K562 (cell line): ENCODE measurements at regions of chr2 and their contacts with region 1.

Region 1: GRCh38 chr2:73156539-73157124 is 43.9 kb upstream of the RAB11FIP5 start:
- DNase-seq: peak; percentile 27 to 67 (median 47)
- ATAC-seq: peak; percentile 96
- H3K4me3 ChIP-seq: no peak overlapping the region
- H3K27ac ChIP-seq: no peak overlapping the region
- H3K4me1 ChIP-seq: peaks cover 2 to 8% of the 10 kb centered on the region in 2 experiments; a peak in 3 of 5 replicates
- H3K27me3 ChIP-seq: peaks cover 3 to 29% of the 10 kb centered on the region in 2 experiments; a peak in 4 of 5 replicates
- CTCF ChIP-seq: peak; percentile 70 to 95 (median 85); a peak in 5 of 6 replicates
- EP300 ChIP-seq: no peak
- POLR2A ChIP-seq: no peak
- RAD21 ChIP-seq: peak; percentile 88 to 94

Region 2: GRCh38 chr2:72859831-72860262 is 296.8 kb before region 1 on chr2:
- CTCF ChIA-PET with region 1: no interaction called
- POLR2A ChIA-PET with region 1: no interaction called
- in situ Hi-C with region 1: no loop called
- intact Hi-C with region 1: no loop called
- DNase-seq: peak; percentile 45 to 74 (median 51)
- ATAC-seq: peak; percentile 84
- H3K4me3 ChIP-seq: no peak overlapping the region
- H3K27ac ChIP-seq: no peak overlapping the region
- H3K4me1 ChIP-seq: peaks cover 3 to 8% of the 10 kb centered on the region in 2 experiments; a peak in 3 of 5 replicates
- H3K27me3 ChIP-seq: peaks cover 0 to 5% of the 10 kb centered on the region in 2 experiments; a peak in 1 of 5 replicates
- CTCF ChIP-seq: peak; percentile 70 to 79 (median 71)
- EP300 ChIP-seq: no peak
- POLR2A ChIP-seq: no peak
- RAD21 ChIP-seq: peak; percentile 78 to 82

Region 3: GRCh38 chr2:72943540-72944395 is 212.9 kb before region 1 on chr2:
- CTCF ChIA-PET with region 1: no interaction called
- POLR2A ChIA-PET with region 1: no interaction called
- in situ Hi-C with region 1: no loop called
- intact Hi-C with region 1: no loop called
- DNase-seq: no peak
- ATAC-seq: no peak
- H3K4me3 ChIP-seq: no peak overlapping the region
- H3K27ac ChIP-seq: no peak overlapping the region
- H3K4me1 ChIP-seq: no peaks in the 10 kb centered on the region; a peak in 1 of 5 replicates
- H3K27me3 ChIP-seq: no peaks in the 10 kb centered on the region
- CTCF ChIP-seq: no peak
- EP300 ChIP-seq: no peak
- POLR2A ChIP-seq: no peak
- RAD21 ChIP-seq: no peak

Region 4: GRCh38 chr2:73085691-73086360 is 70.8 kb before region 1 on chr2:
- CTCF ChIA-PET with region 1: interaction called, 14 read pairs
- POLR2A ChIA-PET with region 1: interaction called, 3 read pairs
- in situ Hi-C with region 1: loop called (anchors 5 kb)
- intact Hi-C with region 1: loop called (anchors 1 kb)
- DNase-seq: peak; percentile 78 to 83 (median 80)
- ATAC-seq: peak; percentile 96
- H3K4me3 ChIP-seq: no peak overlapping the region
- H3K27ac ChIP-seq: no peak overlapping the region
- H3K4me1 ChIP-seq: peaks cover 0 to 12% of the 10 kb centered on the region in 2 experiments; a peak in 4 of 5 replicates
- H3K27me3 ChIP-seq: no peaks in the 10 kb centered on the region
- CTCF ChIP-seq: peak; percentile 91 to 94 (median 93)
- EP300 ChIP-seq: no peak
- POLR2A ChIP-seq: no peak
- RAD21 ChIP-seq: peak; percentile 95

Region 5: GRCh38 chr2:73279852-73280251 is 123.2 kb after region 1 on chr2:
- CTCF ChIA-PET with region 1: no interaction called
- POLR2A ChIA-PET with region 1: no interaction called
- in situ Hi-C with region 1: no loop called
- intact Hi-C with region 1: no loop called
- DNase-seq: peak in 1 of 4 experiments; percentile 41
- ATAC-seq: no peak
- H3K4me3 ChIP-seq: no peak overlapping the region
- H3K27ac ChIP-seq: no peak overlapping the region
- H3K4me1 ChIP-seq: peaks cover 3 to 16% of the 10 kb centered on the region in 2 experiments; a peak in 4 of 5 replicates
- H3K27me3 ChIP-seq: no peaks in the 10 kb centered on the region
- CTCF ChIP-seq: no peak
- EP300 ChIP-seq: no peak
- POLR2A ChIP-seq: no peak
- RAD21 ChIP-seq: no peak